Left cardiac atrium (tissue), 4 donors: ENCODE measurements at regions of chr11 and their contacts with region 1.

Region 1: DNA sequence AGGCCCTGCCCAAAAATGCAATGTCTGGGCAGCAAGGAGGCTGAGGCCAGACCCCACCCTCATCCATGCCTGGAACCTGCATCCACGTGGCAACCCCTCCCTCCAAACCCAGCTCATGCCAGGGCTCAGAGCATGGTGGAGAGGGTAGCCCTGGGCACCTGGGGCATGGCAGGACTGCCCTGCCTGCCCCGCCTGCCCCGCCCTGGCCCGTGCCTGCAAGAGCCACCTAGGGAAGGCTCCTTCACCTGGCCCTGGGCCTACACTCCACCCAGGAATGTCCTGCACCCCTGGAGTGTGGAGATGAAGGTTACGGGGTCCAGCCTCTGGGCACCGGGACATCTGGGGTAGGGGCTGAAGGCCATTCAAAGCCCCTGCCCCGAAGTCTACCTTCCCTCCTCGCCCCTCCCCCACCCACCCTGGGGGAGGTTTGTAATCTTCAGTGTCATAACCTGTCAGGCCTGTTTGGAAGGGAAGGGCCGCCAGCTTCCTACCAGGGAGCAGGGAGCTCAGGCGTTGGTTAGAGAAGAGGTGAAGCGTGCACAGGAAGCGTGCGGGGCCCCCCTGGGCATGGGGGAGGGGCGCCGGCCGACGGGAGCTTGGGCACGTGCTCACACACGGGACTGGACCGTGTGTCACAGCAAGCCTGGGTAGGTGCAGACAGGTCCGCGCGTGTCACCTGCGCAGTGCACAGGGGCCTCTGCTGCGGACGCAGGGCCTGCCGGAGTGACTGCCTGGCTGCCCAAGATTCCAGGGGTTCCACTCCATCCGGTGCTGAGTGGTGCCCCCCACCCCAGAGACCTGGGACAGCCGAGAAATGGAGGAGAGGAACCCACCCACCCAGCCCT is 30.7 kb upstream of the TH start:
- DNase-seq: peak; percentile 10
- ATAC-seq: no peak

Region 2: DNA sequence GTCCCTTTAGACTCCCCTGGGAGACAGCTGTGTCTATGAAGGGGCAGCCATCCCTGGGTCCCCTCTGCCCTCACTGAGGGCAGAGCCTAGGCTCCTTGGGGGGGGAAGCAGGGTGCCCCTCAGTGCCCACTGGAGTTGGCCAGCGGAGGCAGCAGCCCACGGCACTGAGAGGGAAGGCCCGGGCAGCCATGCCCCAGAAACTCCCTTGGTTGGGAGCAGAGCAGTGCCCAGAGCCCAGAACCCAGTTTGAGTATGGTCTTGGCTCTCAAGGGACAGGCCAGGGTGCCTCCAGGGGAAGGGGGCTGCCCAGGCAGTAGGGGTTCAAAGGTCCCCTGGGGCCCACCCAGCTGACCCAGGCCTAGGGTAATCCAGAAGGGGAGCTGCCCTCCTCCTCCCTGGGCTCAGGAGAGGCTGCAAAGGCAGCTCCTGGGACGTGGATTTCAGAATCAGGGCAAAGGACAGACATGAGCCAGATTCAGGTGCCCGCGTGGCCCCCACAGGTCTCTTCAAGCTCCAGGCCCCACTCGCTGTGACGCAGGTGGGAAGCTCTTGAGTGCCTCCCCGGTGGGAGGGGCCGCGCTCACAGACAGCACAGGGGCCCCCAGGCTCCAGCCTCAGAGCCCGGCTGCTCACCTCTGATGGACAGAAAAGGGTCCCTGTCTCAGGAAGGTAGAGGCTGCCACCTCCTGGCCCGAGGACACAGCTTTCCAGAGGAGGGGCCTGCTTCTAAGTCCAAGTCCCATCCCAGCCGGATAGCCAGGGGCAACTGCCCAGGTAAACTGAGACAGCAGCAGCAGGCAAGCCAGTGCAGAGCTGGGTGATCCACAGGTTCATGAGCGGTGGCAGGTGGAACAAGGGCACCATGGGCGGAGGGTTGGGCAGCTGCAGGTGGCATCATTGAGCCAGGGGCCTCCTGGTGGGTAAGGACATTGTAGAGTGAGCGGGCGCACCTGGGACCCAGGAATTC is 96.8 kb after region 1 on chr11:
- intact Hi-C with region 1: loop called (anchors 5 kb)
- DNase-seq: peak; percentile 29
- ATAC-seq: no peak